ENCODE measurements at regions of chr6 and their contacts with region 1.

Region 1: DNA sequence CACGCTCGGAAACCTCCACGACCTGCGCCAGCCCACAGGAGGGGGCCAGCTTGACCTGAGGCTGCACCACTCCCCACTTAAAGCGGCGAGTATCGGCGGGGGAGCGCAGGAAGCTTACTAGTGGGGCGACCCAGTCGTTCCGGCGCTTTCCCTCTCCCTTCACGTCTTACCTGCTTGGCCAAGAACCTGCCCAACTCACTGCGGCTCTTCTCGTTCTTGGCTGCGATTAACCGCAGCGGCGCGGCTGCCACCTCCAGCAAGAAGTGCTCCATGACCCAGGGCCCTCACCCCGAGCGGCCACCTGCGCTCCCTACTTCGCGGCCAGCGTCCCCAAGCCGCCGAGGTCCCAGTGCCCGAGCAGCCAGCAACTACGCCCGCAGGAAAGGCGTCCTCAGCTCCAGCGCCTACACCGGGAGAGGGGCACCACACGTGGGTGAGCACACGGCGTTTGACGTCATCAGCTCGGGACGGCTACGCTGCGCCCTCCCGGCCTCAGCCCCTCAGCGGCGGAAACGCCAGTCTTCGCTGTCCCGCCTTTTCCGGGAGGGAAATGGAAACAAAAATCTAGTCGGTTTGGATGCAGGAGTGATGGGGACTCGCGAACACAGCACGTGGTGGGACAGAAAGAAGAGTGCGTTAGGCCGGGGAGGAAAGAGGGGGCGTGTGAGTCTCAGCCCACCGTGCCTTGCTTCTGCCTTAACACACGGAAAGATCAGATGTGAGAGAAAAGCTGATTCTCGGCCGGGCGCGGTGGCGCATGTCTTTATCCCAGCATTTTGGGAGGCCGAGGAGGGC is at the start of gene MDN1:
- DNase-seq: peak; percentile 91
- H3K4me3 Mint-ChIP-seq: peak within 1 kb of the TSS; percentile 88
- H3K27ac Mint-ChIP-seq: peak within 1 kb of the TSS; percentile 89
- H3K4me1 Mint-ChIP-seq: peaks cover 31% of the 10 kb centered on the region
- H3K27me3 Mint-ChIP-seq: no peaks in the 10 kb centered on the region
- total RNA-seq, gene MDN1: 38.2 to 39.4 TPM

Region 2: GRCh38 chr6:89638320-89639195 is 181.0 kb before region 1 on chr6 and contains the start of gene LYRM2:
- CTCF ChIA-PET with region 1: interaction called, 5 read pairs
- POLR2A ChIA-PET with region 1: interaction called, 13 read pairs
- DNase-seq: peak; percentile 92
- H3K4me3 Mint-ChIP-seq: peak within 1 kb of the TSS; percentile 90
- H3K27ac Mint-ChIP-seq: peak within 1 kb of the TSS; percentile 97
- H3K4me1 Mint-ChIP-seq: peaks cover 37% of the 10 kb centered on the region
- H3K27me3 Mint-ChIP-seq: no peaks in the 10 kb centered on the region
- total RNA-seq, gene LYRM2: 31.4 to 34.4 TPM

Region 3: DNA sequence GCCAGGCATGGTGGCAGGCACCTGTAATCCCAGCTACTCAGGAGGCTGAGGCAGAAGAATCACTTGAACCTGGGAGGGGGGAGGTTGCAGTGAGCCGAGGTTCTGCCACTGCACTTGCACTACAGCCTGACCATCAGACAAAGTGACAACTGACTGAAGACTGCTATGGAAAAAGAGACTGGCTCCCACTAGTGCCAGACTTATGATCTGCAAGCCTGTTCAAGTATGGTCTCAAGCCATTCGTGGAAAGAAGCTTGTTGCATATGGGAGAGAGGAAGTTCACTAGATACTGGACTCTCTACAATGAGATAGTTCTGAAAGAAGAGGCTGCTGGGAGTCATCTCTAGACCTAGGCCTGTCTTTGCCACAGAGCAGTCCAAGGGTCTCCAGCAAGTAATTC is 26.7 kb before region 1 on chr6:
- CTCF ChIA-PET with region 1: interaction called, 4 read pairs
- POLR2A ChIA-PET with region 1: interaction called, 18 read pairs
- DNase-seq: peak; percentile 49
- H3K4me3 Mint-ChIP-seq: no peak overlapping the region
- H3K27ac Mint-ChIP-seq: peak overlapping the region; percentile 73
- H3K4me1 Mint-ChIP-seq: peaks cover 26% of the 10 kb centered on the region
- H3K27me3 Mint-ChIP-seq: no peaks in the 10 kb centered on the region